ENCODE measurements at regions of chr9 and their contacts with region 1.

Region 1: GRCh38 chr9:6667633-6668280 is 22.2 kb upstream of the GLDC start:
- DNase-seq: no peak
- ATAC-seq: no peak

Region 2: DNA sequence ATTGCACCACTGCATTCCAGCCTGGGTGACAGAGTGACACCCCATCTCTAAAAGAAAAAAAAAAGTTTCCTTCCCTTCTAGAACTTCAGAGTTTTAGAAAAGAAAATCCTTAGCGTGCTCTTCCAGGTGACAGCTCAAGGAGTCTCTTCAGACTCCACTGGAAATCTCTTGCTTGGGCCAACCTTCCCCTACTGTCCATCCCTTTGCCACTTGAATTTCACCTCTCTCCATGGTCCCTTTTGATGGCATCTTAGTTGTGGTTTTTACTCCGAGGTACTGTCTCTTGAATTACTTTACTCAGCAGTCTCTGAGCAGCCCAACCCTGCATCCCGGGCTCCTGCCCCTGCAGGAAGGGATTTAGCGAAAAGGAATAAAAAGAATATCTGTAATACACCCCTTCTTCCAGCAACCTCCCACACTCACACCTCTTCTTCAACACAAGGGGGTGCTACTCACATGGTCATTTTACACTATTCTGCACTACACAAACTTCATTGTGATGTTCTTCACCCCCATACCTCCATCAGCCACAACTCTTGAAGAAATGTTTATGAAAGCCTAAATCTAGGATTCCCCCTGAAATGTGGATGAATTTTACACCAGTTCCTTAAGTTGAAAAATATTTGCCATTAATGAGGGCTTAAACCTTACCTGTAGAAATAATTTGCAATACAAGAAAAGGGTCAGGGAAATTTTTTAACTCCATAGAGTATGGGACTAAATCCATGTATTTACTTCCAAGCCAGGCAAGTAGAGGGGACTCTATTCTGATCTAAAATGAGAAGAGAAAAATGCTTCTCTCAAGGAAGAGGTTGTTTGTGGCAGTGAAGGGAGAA is 313.7 kb before region 1 on chr9:
- intact Hi-C with region 1: loop called in 1 of 2 experiments (anchors 10 kb)
- DNase-seq: no peak
- ATAC-seq: peak; percentile 80

Region 3: GRCh38 chr9:6512085-6512657 is 155.6 kb before region 1 on chr9:
- intact Hi-C with region 1: loop called in 1 of 2 experiments (anchors 10 kb)
- DNase-seq: no peak
- ATAC-seq: no peak

Region 4: GRCh38 chr9:6584881-6585597 is 82.7 kb before region 1 on chr9:
- intact Hi-C with region 1: loop called in 1 of 2 experiments (anchors 10 kb)
- DNase-seq: no peak
- ATAC-seq: peak; percentile 54

Region 5: DNA sequence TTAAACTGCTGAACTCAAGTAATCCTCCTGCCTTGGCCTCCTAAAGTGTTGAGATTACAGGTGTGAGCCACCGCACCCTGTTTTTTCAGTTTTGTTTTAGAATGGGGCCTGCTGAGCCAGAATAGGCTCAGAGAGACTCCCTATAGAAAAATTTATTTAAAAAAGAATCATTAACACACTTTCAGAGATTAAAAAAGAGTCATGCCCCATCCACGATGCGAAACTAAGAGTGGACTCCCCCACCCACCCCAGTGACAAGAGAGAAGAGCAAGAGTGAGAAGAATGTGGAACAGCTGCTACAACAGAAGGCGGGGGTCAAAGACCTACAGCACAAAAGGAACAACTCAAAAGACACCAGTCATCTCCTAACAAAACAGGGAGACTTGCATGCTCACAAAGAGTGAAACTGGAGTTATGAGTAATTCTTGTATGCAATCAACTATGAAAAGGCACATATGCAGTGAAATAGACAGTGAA is 69.5 kb before region 1 on chr9:
- intact Hi-C with region 1: no loop called
- DNase-seq: no peak
- ATAC-seq: no peak

Region 6: GRCh38 chr9:6788162-6789016 is 120.6 kb after region 1 on chr9:
- intact Hi-C with region 1: no loop called
- DNase-seq: peak in 1 of 2 donors; percentile 24
- ATAC-seq: peak; percentile 87

Region 7: DNA sequence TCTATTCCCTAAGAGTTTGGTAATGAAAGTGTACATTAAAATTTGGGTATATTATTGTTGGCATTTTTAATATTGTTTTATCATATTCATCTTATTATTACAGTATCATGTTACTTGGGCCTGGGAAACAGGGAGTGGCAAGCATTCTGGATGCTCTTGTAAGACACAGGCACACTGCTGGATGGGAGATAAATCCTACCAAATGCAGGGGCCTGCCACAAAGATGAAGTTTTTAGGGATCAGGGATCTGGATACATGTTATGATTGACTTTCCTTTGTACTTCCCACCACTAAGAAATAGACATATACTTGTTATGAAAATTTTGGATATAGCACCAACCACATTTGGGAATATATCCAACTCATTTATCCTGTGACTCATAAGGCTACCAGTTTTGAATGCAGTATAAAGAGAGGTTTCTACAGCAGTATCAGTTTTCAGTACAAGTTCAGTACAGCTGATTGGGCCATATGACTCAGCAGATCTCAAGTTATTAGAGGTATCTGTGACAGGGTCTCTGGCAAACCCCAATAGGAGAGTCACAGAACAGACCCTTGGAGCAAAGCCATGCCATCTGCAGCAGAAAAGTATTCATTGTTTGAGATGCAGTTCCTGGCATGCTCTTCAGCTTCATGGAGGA is 771.7 kb after region 1 on chr9:
- intact Hi-C with region 1: no loop called
- DNase-seq: no peak
- ATAC-seq: no peak